CD8-positive, alpha-beta T cell (primary cell): ENCODE measurements at regions of chr15 and their contacts with region 1.

Region 1: DNA sequence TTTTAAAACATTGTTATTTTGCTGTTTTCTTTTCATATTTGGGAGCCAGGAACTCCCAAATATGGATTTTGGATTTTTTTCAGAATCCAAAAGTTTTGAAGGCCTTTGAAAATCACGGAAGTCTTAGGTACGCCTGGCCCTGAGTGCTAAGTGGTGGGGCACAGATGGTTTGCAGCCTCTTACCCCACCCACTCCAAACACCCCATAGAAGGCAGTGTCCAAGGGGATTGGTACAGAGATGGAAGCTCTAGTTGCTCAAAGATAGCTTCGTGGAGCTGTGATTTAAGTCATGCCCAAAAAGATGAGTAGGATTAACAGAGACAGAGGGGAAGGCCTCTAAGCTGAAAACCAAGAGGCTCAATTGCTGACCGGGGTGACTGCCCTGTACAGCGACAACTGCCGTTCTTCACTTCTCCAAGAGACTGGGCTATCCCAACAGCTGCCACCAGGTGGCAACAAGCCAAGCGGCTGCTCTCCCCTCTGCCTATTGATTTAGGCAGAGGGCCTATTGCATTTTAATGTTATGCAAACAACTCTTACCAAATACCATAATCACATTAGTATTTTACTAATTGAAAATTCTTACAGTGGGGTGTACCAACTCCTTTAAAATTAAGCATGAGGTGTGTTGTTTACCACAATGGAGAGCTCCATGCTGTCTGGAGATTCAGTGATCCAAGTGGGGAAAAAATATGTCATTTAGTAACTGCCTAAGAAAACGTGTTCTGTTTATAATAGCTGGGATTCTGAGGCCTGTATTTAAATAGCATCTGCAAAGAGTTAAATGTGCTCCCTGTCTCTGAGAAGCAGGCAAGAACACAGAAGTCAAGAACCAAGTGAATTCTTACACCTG is 64.0 kb upstream of the C15orf61 start:
- DNase-seq: peak; percentile 65 to 89 (median 81)
- ATAC-seq: peak; percentile 94
- H3K4me3 ChIP-seq: no peak overlapping the region
- H3K4me3 Mint-ChIP-seq: no peak overlapping the region
- H3K27ac ChIP-seq: no peak overlapping the region
- H3K27ac Mint-ChIP-seq: no peak overlapping the region
- H3K4me1 ChIP-seq: no peaks in the 10 kb centered on the region
- H3K4me1 Mint-ChIP-seq: peaks cover 3% of the 10 kb centered on the region
- H3K27me3 ChIP-seq: no peaks in the 10 kb centered on the region
- H3K27me3 Mint-ChIP-seq: no peaks in the 10 kb centered on the region
- CTCF ChIP-seq: peak; percentile 80

Region 2: GRCh38 chr15:67267951-67268941 is 188.7 kb before region 1 on chr15:
- CTCF ChIA-PET with region 1: no interaction called
- POLR2A ChIA-PET with region 1: no interaction called
- intact Hi-C with region 1: no loop called
- DNase-seq: no peak
- ATAC-seq: no peak
- H3K4me3 ChIP-seq: no peak overlapping the region
- H3K4me3 Mint-ChIP-seq: no peak overlapping the region
- H3K27ac ChIP-seq: no peak overlapping the region
- H3K27ac Mint-ChIP-seq: no peak overlapping the region
- H3K4me1 ChIP-seq: no peaks in the 10 kb centered on the region
- H3K4me1 Mint-ChIP-seq: no peaks in the 10 kb centered on the region
- H3K27me3 ChIP-seq: no peaks in the 10 kb centered on the region
- H3K27me3 Mint-ChIP-seq: no peaks in the 10 kb centered on the region
- CTCF ChIP-seq: no peak

Region 3: DNA sequence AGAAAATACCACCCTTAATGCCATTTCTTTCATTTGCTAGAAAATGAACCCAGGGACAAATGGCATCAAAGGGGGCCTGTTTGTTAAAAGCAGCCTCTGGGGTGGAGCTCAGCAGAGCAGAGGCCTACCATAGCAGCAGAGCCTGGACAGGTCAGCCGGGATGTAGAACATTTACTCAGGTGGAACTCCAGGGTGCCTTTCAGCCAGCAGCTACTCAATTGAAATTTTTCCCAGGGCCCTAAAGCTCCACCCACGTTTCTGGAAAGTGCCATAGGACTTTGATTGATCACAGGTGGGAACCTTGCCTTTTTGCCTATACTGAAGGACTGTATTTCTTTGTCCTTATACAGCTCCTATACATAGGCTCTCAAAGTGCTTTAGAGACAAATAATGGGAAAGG is 10.5 kb before region 1 on chr15:
- CTCF ChIA-PET with region 1: interaction called, 14 read pairs
- POLR2A ChIA-PET with region 1: no interaction called
- intact Hi-C with region 1: no loop called
- DNase-seq: no peak
- ATAC-seq: no peak
- H3K4me3 ChIP-seq: no peak overlapping the region
- H3K4me3 Mint-ChIP-seq: no peak overlapping the region
- H3K27ac ChIP-seq: no peak overlapping the region
- H3K27ac Mint-ChIP-seq: no peak overlapping the region
- H3K4me1 ChIP-seq: no peaks in the 10 kb centered on the region
- H3K4me1 Mint-ChIP-seq: no peaks in the 10 kb centered on the region
- H3K27me3 ChIP-seq: no peaks in the 10 kb centered on the region
- H3K27me3 Mint-ChIP-seq: no peaks in the 10 kb centered on the region
- CTCF ChIP-seq: no peak

Region 4: DNA sequence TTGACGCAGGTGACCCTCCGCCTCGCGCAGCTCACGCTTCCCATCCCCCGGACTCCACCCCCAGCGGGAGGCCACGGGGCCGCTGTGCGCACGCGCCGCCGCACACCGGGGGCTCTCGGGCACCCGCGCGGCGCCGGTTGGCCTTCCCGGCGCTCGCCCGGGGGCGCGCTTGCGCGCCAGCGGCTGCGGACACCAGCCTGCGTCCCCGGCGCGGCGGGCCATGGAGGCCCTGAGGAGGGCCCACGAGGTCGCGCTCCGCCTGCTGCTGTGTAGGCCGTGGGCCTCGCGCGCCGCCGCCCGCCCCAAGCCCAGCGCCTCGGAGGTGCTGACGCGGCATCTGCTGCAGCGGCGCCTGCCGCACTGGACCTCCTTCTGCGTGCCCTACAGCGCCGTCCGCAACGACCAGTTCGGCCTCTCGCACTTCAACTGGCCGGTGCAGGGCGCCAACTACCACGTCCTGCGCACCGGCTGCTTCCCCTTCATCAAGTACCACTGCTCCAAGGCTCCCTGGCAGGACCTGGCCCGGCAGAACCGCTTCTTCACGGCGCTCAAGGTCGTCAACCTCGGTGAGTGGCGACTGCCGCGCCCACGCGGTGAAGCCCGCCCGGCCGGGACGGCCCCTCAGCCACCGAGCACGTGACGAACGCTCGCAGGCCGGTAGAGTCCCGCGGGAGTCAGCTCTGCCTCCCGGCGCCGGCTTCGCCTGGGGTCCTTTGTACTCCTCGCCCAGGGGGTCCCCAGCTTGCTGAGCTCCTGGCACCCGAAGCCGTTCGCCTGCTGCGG is 64.3 kb after region 1 on chr15 and contains the start of gene C15orf61:
- CTCF ChIA-PET with region 1: no interaction called
- POLR2A ChIA-PET with region 1: no interaction called
- intact Hi-C with region 1: loop called in 1 of 2 experiments (anchors 10 kb)
- DNase-seq: peak; percentile 61 to 94 (median 84)
- ATAC-seq: peak; percentile 82
- H3K4me3 ChIP-seq: peak within 1 kb of the TSS; percentile 92 to 95
- H3K4me3 Mint-ChIP-seq: peak within 1 kb of the TSS; percentile 93
- H3K27ac ChIP-seq: peak within 1 kb of the TSS; percentile 72 to 92
- H3K27ac Mint-ChIP-seq: peak within 1 kb of the TSS; percentile 94
- H3K4me1 ChIP-seq: peaks cover 14% of the 10 kb centered on the region
- H3K4me1 Mint-ChIP-seq: peaks cover 36% of the 10 kb centered on the region
- H3K27me3 ChIP-seq: no peaks in the 10 kb centered on the region
- H3K27me3 Mint-ChIP-seq: no peaks in the 10 kb centered on the region
- CTCF ChIP-seq: no peak
- total RNA-seq, gene C15orf61: 11.2 to 14.4 TPM

Region 5: DNA sequence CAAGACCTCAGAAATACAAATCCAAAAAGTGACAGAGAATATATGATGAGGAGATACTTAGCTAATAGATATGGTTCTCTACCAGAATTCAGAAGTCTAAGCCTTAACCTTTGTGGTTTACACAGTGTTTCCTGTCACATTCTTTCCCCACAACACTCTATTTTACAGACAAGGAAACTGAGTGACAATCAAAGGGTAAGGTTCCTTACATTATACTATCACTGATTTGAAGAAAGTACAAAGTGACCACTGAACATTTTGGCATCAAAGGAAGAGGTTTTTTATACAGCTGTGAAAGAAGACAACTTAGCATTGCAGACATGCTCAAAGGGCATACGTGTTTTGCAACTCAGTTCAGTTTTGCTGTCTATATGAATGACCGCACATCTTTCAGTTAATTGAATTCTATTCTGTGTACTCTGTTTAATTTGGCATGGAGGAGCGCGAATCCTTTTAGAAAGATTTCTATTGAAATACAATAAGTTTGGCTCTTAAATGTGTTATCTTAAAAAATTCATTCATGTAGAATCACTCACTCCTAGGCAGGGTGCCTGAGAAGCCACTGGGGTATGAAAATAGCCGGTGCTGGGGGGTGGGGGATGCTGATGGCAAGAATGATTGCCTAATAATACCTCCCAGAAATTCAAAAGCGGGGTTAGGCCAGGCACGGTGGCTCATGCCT is 301.9 kb after region 1 on chr15:
- CTCF ChIA-PET with region 1: no interaction called
- POLR2A ChIA-PET with region 1: no interaction called
- intact Hi-C with region 1: loop called in 1 of 2 experiments (anchors 10 kb)
- DNase-seq: peak in 2 of 9 experiments; percentile 27 to 60
- ATAC-seq: peak; percentile 63
- H3K4me3 ChIP-seq: no peak overlapping the region
- H3K4me3 Mint-ChIP-seq: peak overlapping the region; percentile 58
- H3K27ac ChIP-seq: no peak overlapping the region
- H3K27ac Mint-ChIP-seq: peak overlapping the region; percentile 47
- H3K4me1 ChIP-seq: peaks cover 84% of the 10 kb centered on the region
- H3K4me1 Mint-ChIP-seq: peaks cover 94% of the 10 kb centered on the region
- H3K27me3 ChIP-seq: no peaks in the 10 kb centered on the region
- H3K27me3 Mint-ChIP-seq: no peaks in the 10 kb centered on the region
- CTCF ChIP-seq: no peak

Region 6: DNA sequence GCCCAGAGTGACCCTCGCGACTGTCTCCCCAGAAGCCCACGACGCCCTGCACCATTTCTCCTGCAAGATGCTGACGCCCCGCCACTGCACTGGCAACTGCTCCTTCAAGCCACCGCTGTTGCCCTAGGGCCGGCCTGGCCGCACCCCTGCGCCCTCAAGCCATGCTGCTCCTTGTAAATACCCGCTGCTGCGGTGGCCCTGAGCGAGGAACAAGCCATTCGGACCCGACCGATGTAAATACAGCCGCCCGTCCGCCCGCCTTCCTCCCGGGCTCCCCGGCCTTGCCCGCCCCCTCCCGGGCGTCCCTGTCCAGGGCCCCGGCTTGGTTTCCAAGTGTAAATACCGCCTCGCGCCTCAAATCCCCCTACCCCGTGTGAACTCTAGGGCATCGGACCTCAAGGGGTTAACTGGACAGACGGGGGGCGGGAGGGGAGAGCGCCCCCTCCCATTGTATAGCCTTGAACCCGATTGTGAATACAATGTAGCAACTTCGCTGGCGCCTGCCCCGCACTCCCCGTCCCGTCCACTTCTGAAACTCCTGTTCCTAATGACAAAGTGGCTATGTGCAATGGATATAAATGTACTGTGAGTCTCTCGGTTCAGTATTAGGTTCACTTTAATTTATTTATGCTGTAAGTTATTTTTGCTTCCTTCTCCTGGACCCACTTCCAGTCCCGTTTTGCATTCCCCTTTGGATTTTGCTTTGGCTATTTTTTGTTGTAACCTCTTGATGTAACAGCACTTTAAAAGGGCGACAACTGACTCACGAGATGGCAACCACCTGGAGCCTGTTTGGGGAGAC is 377.0 kb after region 1 on chr15:
- CTCF ChIA-PET with region 1: interaction called, 98 read pairs
- POLR2A ChIA-PET with region 1: interaction called, 6 read pairs
- intact Hi-C with region 1: loop called (anchors 1 kb)
- DNase-seq: peak in 5 of 9 experiments; percentile 30 to 69 (median 47)
- ATAC-seq: peak; percentile 37
- H3K4me3 ChIP-seq: peak overlapping the region; percentile 42 to 51
- H3K4me3 Mint-ChIP-seq: peak overlapping the region; percentile 83
- H3K27ac ChIP-seq: no peak overlapping the region
- H3K27ac Mint-ChIP-seq: no peak overlapping the region
- H3K4me1 ChIP-seq: peaks cover 48% of the 10 kb centered on the region
- H3K4me1 Mint-ChIP-seq: peaks cover 51% of the 10 kb centered on the region
- H3K27me3 ChIP-seq: peaks cover 46 to 57% of the 10 kb centered on the region in 2 experiments
- H3K27me3 Mint-ChIP-seq: peaks cover 53% of the 10 kb centered on the region
- CTCF ChIP-seq: peak; percentile 40